Right lobe of liver (tissue), 6 donors: ENCODE measurements at regions of chr6 and their contacts with region 1.

Region 1: DNA sequence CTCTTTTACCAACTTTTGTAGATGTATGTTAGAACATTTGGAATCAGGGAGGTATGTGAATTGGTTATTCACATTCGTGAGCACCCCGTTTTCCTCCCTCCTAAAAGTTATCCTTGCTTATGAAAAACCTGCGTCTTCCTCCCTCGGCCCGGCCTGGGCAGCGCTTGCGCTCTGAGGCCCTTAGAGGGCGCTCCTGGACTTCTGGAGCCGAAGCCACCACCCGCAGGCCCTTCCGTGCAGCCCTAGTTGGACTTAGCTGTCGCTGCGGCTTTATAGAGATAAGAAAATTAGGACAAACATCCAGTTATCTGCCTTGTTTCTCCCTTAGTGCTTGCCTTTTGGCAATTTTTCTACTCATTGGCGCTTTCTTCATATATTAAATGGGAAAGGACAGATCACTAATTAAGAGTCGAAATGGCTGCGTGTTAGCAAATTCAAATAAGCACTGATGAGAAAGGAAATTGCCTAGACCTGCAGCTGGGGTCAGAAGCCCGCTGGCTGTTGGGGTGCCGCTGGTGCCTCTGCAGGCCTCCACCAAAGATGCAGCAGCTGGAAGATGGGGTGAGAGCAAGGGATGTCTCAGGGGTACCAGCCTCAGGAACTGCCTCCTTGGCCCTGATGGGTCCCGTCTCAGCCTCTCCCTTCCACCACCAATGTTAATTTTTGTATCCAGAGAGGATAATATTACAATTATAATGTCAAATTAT is 5.2 kb downstream of the FNDC1 start:
- DNase-seq: peak; percentile 77 to 81 (median 78)
- ATAC-seq: peak; percentile 93 to 98 (median 96)
- H3K4me3 ChIP-seq: no peak overlapping the region
- H3K27ac ChIP-seq: no peak overlapping the region
- H3K4me1 ChIP-seq: peaks cover 0 to 9% (median 0%) of the 10 kb centered on the region in 4 donors
- H3K27me3 ChIP-seq: peaks cover 6% of the 10 kb centered on the region in 2 donors
- CTCF ChIP-seq: peak; percentile 80 to 97 (median 94)
- POLR2A ChIP-seq: no peak

Region 2: DNA sequence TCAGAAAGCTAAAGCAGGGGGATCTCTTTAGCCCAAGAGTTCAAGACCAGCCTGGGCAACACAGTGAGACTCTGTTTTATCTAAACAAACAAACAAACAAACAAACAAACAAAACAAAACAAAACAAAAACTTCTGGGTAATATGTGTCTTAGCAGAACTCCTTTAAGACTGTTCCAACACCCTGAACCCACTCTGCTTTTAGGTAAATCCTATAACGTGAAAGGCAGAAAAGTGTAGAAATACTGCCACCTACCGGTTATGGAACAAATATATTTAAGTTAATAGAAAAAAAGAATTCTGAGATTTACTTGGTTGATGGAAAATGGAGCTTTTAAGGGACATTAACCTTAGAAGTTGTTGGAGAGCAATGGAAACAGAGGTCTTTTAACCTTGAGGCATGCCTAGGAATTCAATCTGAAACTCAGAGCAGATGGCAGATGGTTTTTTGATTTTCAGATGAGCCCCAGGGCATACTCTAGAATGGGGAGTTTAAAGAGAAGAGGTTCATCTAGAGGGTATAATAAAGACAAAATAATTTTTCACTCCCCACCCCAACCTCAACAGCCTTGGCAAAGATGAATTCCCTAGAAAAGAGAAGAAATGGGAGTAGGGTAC is 480.2 kb after region 1 on chr6:
- intact Hi-C with region 1: loop called in 1 of 2 experiments (anchors 5 kb)
- DNase-seq: no peak
- ATAC-seq: peak; percentile 28 to 67 (median 59)
- H3K4me3 ChIP-seq: no peak overlapping the region
- H3K27ac ChIP-seq: no peak overlapping the region
- H3K4me1 ChIP-seq: no peaks in the 10 kb centered on the region
- H3K27me3 ChIP-seq: no peaks in the 10 kb centered on the region
- CTCF ChIP-seq: peak; percentile 53 to 63 (median 58)
- POLR2A ChIP-seq: no peak